Activated CD4-positive, alpha-beta T cell treated with anti-CD3 and anti-CD28 coated beads, Interleukin-2, amount 10 ng/mL, durations not matched to agents 24 days and 14 days (primary cell): ENCODE measurements at regions of chr19 and their contacts with region 1.

Region 1: DNA sequence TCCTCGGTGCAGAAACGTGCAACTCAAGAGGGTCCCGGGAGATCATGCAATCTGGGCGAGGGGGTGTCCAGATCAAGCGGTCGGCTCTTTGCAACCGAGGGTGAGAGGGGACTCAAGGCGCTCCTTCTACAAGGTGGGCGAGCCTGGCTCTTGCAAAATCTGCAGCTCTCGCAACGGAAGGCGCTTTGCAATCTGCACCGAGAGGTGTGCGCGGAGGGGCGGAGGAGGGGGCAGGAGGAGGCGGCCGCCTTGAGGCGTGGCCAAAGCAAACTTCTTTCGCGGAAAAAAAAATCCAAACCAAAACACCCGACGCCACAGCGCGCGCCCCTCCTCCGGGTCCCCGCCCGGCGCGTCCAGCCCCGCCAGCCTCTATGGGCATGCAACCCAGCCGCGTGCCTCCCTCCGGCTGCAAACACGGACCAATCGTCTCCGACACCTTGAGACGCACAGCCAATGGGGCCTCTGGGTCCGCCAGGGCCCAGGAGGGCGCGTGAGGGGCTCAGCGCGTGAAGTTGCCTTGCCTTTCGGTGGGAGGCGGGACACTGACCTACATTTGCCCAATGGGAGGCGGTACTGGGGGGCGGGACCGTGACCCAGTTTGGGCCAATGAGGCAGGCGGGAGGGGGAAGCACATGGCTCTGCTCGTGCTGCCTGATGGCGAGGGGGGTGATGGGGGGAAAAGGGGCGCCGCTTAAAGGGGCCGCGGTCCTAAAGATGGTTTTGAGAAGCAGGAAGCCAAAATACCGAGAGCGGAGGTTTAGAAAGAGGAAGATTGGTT is at the start of gene DBP:
- DNase-seq: peak; percentile 100
- H3K4me3 Mint-ChIP-seq: peak within 1 kb of the TSS; percentile 86
- H3K27ac Mint-ChIP-seq: peak within 1 kb of the TSS; percentile 99
- H3K4me1 Mint-ChIP-seq: peaks cover 35% of the 10 kb centered on the region
- H3K27me3 Mint-ChIP-seq: peaks cover 2% of the 10 kb centered on the region
- total RNA-seq, gene DBP: 10.7 and 11.2 TPM in 2 replicates

Region 2: GRCh38 chr19:48618916-48619691 is 18.3 kb before region 1 on chr19 and contains the starts of genes RPL18 and SPHK2:
- intact Hi-C with region 1: loop called (anchors 1 kb)
- DNase-seq: peak; percentile 99
- H3K4me3 Mint-ChIP-seq: peak within 1 kb of the TSS; percentile 91
- H3K27ac Mint-ChIP-seq: peak within 1 kb of the TSS; percentile 98
- H3K4me1 Mint-ChIP-seq: peaks cover 38% of the 10 kb centered on the region
- H3K27me3 Mint-ChIP-seq: no peaks in the 10 kb centered on the region
- total RNA-seq, gene RPL18: 1,885 and 1,938 TPM in 2 replicates
- total RNA-seq, gene SPHK2: 36.4 and 39.0 TPM in 2 replicates

Region 3: DNA sequence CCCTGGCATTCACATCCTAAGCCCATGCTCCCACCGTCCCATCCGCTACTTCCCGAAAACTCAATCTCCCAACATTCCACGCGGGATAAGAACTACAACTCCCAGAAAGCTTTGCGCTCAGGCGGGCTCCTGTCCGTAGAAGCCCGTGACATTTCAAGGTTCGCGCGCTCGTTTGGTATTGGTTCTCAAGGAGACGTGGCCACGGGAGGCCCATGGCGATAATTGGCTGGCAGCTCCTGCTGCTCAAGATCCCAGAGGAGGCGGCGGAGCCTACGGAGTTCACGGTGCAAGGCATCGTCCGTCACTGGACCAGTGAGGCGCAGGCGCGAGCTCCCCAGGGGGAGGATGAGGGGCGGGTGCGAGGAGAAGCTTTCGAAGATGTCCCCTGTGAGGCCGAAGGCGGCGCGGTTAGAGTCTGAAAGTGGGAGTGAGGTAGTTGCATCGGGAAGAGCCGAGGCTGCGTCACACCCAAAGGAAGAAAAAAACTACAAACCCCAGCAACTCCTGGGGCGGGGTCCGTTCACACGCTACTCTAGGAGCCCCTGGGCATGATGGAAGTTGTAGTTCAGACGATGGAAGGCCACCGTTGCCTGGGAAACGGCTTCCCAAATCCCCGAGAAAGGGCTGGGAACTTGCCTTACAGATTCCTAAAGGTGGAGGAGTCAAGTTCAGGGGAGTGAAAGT is 83.4 kb after region 1 on chr19:
- intact Hi-C with region 1: loop called (anchors 2 kb)
- DNase-seq: peak; percentile 98
- H3K4me3 Mint-ChIP-seq: peak overlapping the region; percentile 91
- H3K27ac Mint-ChIP-seq: peak overlapping the region; percentile 97
- H3K4me1 Mint-ChIP-seq: peaks cover 12% of the 10 kb centered on the region
- H3K27me3 Mint-ChIP-seq: no peaks in the 10 kb centered on the region

Region 4: GRCh38 chr19:48993175-48994034 is 356.0 kb after region 1 on chr19 and contains the starts of genes GYS1 and RUVBL2:
- intact Hi-C with region 1: loop called (anchors 5 kb)
- DNase-seq: peak; percentile 100
- H3K4me3 Mint-ChIP-seq: peak within 1 kb of the TSS; percentile 92
- H3K27ac Mint-ChIP-seq: peak within 1 kb of the TSS; percentile 97
- H3K4me1 Mint-ChIP-seq: peaks cover 40% of the 10 kb centered on the region
- H3K27me3 Mint-ChIP-seq: no peaks in the 10 kb centered on the region
- total RNA-seq, gene GYS1: 73.8 and 77.8 TPM in 2 replicates
- total RNA-seq, gene RUVBL2: 190 and 195 TPM in 2 replicates

Region 5: DNA sequence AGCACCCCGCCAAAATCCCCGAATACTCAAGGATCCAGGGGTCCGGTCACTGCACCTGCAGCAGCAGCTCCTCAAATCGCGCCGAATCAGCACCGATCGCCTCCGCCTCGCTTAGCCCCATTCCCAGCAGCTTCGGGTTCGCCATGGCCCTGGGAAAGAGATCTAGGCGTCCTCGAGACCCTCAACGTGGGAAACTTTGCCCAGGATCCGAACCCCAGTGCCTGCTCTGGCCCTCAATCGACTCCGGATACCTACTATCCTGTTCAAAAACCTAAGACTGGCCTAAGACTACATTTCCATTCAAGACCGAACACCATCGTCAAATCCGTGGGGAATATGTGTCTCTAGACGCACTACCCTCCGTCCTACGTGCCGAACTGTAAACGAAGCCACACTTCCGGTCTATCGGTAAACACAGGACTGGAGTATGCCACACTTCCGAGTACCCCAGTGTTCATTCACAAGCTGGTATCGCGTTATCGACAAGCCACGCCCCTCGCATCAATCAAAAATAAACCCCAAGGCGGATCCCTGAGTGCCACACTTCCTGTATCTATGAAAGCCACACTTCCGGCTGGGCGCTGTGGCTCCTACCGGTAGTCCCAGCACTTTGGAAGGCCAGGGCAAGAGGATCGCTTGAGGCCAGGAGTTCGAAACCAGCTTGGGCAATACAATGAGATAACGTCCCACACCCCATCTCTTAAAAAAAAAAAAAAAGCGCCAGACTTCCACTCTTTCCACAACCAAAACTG is 814.2 kb after region 1 on chr19 and contains the start of gene PIH1D1:
- intact Hi-C with region 1: loop called (anchors 5 kb)
- DNase-seq: peak; percentile 98
- H3K4me3 Mint-ChIP-seq: peak within 1 kb of the TSS; percentile 91
- H3K27ac Mint-ChIP-seq: peak within 1 kb of the TSS; percentile 100
- H3K4me1 Mint-ChIP-seq: peaks cover 38% of the 10 kb centered on the region
- H3K27me3 Mint-ChIP-seq: no peaks in the 10 kb centered on the region
- total RNA-seq, gene PIH1D1: 134 and 135 TPM in 2 replicates